Calu3 (cell line): ENCODE measurements at regions of chr1 and their contacts with region 1.

Region 1: DNA sequence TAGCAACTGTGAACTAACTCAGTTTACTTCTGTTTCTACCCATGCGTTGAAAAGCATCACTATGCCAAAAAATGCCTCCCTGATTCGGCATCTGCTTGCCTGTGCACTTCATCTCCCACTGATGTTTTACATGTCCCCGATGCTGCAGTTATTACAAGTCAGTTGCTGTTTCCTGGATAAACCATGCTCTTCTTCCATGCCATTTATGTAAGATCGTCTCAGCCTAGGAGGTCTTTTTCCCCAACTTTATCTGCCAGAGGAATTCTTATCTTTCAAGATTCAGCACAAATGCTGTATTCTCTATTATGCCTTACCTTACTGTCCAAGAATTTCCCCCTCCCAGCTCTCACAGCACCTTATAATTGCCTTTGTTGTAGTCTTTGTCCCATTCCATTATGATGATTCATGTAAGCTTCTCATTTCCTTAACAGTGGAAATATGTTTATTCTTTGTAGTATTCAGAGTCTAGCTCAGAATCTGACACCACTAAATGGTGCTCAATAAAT is 30.0 kb downstream of the PRKACB start:
- DNase-seq: peak; percentile 29
- H3K4me3 Mint-ChIP-seq: peak overlapping the region; percentile 58
- H3K27ac Mint-ChIP-seq: peak overlapping the region; percentile 88
- H3K4me1 Mint-ChIP-seq: peaks cover 23% of the 10 kb centered on the region
- H3K27me3 Mint-ChIP-seq: no peaks in the 10 kb centered on the region
- CTCF ChIP-seq: no peak

Region 2: GRCh38 chr1:84107955-84108354 is 66.1 kb before region 1 on chr1:
- CTCF ChIA-PET with region 1: no interaction called
- intact Hi-C with region 1: no loop called
- DNase-seq: no peak
- H3K4me3 Mint-ChIP-seq: no peak overlapping the region
- H3K27ac Mint-ChIP-seq: no peak overlapping the region
- H3K4me1 Mint-ChIP-seq: peaks cover 16% of the 10 kb centered on the region
- H3K27me3 Mint-ChIP-seq: no peaks in the 10 kb centered on the region
- CTCF ChIP-seq: no peak

Region 3: DNA sequence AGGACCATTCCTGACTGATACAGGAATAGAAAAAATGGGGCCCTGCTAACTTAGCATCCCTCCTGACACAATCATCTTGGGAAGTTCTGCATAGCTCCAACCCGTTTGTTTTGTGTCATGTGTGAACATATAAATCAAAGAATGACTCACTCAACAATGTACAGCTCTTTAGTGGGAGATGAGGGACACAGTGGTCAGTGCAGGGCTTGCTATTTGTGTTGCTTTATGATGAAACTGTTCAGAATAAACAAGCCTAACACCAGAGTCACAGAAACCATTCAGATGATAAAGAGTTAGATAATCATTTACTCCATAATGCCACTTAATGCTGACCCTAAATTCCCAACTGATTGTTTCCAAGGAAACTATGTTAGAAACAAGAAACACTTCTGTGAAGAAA is 1688.4 kb after region 1 on chr1:
- CTCF ChIA-PET with region 1: interaction called, 10 read pairs
- intact Hi-C with region 1: no loop called
- DNase-seq: peak; percentile 11
- H3K4me3 Mint-ChIP-seq: no peak overlapping the region
- H3K27ac Mint-ChIP-seq: no peak overlapping the region
- H3K4me1 Mint-ChIP-seq: peaks cover 24% of the 10 kb centered on the region
- H3K27me3 Mint-ChIP-seq: no peaks in the 10 kb centered on the region
- CTCF ChIP-seq: no peak